Natural killer cell (primary cell): ENCODE measurements at regions of chr7 and their contacts with region 1.

Region 1: GRCh38 chr7:36686499-36686898 is 37.8 kb downstream of the AOAH start:
- DNase-seq: peak; percentile 49 to 58
- ATAC-seq: peak; percentile 84 to 89 (median 89)
- H3K4me3 ChIP-seq: no peak overlapping the region
- H3K4me3 Mint-ChIP-seq: peak overlapping the region; percentile 79
- H3K27ac ChIP-seq: peak overlapping the region; percentile 32
- H3K27ac Mint-ChIP-seq: peak overlapping the region; percentile 88 to 92
- H3K4me1 ChIP-seq: peaks cover 44% of the 10 kb centered on the region
- H3K4me1 Mint-ChIP-seq: peaks cover 77 to 86% of the 10 kb centered on the region in 2 donors
- H3K27me3 ChIP-seq: no peaks in the 10 kb centered on the region
- H3K27me3 Mint-ChIP-seq: no peaks in the 10 kb centered on the region
- CTCF ChIP-seq: no peak

Region 2: GRCh38 chr7:36653008-36653670 is 33.4 kb before region 1 on chr7:
- intact Hi-C with region 1: no loop called
- DNase-seq: no peak
- ATAC-seq: no peak
- H3K4me3 ChIP-seq: no peak overlapping the region
- H3K4me3 Mint-ChIP-seq: no peak overlapping the region
- H3K27ac ChIP-seq: no peak overlapping the region
- H3K27ac Mint-ChIP-seq: peak overlapping the region; percentile 94 to 99
- H3K4me1 ChIP-seq: peaks cover 21% of the 10 kb centered on the region
- H3K4me1 Mint-ChIP-seq: peaks cover 80 to 85% of the 10 kb centered on the region in 2 donors
- H3K27me3 ChIP-seq: no peaks in the 10 kb centered on the region
- H3K27me3 Mint-ChIP-seq: no peaks in the 10 kb centered on the region
- CTCF ChIP-seq: no peak

Region 3: GRCh38 chr7:36979810-36980248 is 293.3 kb after region 1 on chr7:
- intact Hi-C with region 1: loop called (anchors 10 kb)
- DNase-seq: no peak
- ATAC-seq: no peak
- H3K4me3 ChIP-seq: no peak overlapping the region
- H3K4me3 Mint-ChIP-seq: no peak overlapping the region
- H3K27ac ChIP-seq: no peak overlapping the region
- H3K27ac Mint-ChIP-seq: no peak overlapping the region
- H3K4me1 ChIP-seq: peaks cover 8% of the 10 kb centered on the region
- H3K4me1 Mint-ChIP-seq: peaks cover 38 to 51% of the 10 kb centered on the region in 2 donors
- H3K27me3 ChIP-seq: no peaks in the 10 kb centered on the region
- H3K27me3 Mint-ChIP-seq: no peaks in the 10 kb centered on the region
- CTCF ChIP-seq: no peak